Mammary epithelial cell (primary cell): ENCODE measurements at regions of chr1 and their contacts with region 1.

Region 1: GRCh38 chr1:109850194-109850593 is 60.5 kb upstream of the CSF1 start:
- DNase-seq: no peak
- H3K4me3 ChIP-seq: no peak overlapping the region
- H3K27ac ChIP-seq: no peak overlapping the region
- H3K4me1 ChIP-seq: peaks cover 13% of the 10 kb centered on the region
- H3K27me3 ChIP-seq: no peaks in the 10 kb centered on the region
- CTCF ChIP-seq: no peak

Region 2: DNA sequence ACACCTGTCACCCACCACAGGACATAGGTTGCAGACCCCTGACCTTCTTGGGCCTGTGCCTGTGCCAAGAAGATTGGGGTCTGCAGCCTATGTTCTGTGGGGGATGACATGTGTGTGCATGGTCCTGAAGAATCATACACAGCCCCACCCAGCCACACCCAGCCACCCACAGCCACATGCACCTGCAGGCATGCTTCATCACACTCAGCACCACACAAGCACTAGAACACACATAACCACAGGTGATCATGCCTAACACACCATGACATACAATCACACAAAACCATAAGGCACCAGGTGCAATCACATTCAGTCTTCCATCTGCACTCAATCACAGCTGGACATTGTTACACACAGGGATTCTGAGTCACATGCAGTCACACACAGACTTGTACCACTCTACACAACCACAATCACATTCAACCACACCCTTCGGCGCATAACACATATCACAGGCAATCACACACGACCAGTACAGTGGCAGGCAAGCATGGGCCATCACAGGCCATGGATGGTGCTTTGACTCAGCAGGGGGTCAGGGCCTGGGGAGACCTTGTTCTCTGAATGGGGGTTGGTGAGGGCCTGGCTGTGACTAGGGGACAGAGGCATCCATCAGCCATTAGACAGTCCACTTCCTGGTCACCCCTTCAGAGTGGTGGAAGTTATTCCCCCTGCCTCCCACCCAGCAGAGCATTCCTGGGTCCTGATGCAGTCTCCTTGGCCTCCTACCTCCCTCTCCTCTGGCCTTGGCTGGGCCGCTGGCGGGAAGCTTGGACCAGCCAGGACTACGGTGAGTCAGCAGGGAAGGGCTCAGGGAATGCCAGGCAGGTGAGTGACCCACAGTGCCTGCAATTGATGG is 42.1 kb before region 1 on chr1:
- CTCF ChIA-PET with region 1: no interaction called
- dilution Hi-C with region 1: loop called (anchors 5 kb)
- in situ Hi-C with region 1: no loop called
- intact Hi-C with region 1: no loop called
- DNase-seq: peak; percentile 57
- H3K4me3 ChIP-seq: no peak overlapping the region
- H3K27ac ChIP-seq: no peak overlapping the region
- H3K4me1 ChIP-seq: peaks cover 18% of the 10 kb centered on the region
- H3K27me3 ChIP-seq: no peaks in the 10 kb centered on the region
- CTCF ChIP-seq: no peak

Region 3: DNA sequence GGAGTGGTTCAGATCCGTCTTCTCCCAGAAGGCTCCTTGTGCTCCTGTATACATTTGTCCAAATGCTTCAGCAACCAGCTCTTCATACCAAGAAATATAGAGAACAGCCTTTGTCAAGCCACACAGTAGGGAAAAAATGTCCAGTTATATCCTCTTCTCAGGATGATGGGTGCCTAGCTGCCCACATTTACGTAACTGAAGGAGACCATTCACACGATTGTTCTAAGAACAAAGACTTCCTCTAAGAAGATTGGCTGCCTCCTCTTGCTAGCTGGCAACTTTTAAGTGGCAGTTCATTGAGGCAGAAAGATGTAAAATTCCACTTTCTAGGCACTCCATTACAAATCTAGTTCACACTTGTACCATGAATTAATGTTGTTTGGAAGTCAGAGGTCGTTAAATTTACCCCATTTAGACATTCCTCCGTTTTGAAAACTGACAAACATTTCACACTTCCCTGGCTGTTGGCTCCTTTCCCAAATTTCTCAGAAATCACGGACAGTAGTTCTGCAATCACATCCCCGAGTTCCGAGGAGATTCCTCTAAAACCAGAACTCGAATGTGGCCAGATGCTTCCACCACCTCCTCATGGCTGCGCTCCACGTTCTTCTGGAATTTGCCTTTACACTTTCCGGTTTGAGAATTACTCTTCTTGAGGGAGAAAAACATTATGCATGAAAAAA is 14.9 kb after region 1 on chr1:
- CTCF ChIA-PET with region 1: no interaction called
- dilution Hi-C with region 1: no loop called
- in situ Hi-C with region 1: no loop called
- intact Hi-C with region 1: no loop called
- DNase-seq: no peak
- H3K4me3 ChIP-seq: no peak overlapping the region
- H3K27ac ChIP-seq: no peak overlapping the region
- H3K4me1 ChIP-seq: no peaks in the 10 kb centered on the region
- H3K27me3 ChIP-seq: no peaks in the 10 kb centered on the region
- CTCF ChIP-seq: no peak

Region 4: DNA sequence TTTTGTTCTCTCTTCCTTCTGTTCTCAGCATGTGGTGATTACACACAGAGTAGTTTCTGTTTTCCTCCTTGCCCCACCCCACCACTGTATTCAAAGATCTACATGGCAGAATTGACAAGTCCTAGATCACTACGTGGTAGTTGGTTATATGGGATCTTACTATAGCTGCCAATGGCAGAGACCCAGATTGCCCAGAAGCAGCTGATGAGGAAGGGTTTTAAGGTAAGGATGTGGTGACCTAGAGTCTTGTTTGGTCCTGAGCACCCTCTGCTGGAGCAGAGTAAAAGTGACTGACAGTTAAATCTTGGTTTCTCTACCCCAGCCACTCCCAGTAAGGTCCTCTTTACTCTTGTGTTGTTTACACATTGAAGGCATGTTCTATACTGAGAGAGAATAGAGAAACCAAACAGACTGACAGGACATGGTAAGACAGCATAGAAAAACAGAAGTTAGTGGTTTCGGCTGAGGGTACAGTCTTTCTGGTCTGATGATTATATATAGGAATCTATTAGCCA is 161.4 kb after region 1 on chr1:
- CTCF ChIA-PET with region 1: no interaction called
- dilution Hi-C with region 1: no loop called
- in situ Hi-C with region 1: no loop called
- intact Hi-C with region 1: no loop called
- DNase-seq: peak; percentile 54
- H3K4me3 ChIP-seq: no peak overlapping the region
- H3K27ac ChIP-seq: no peak overlapping the region
- H3K4me1 ChIP-seq: no peaks in the 10 kb centered on the region
- H3K27me3 ChIP-seq: no peaks in the 10 kb centered on the region
- CTCF ChIP-seq: peak; percentile 58 to 71